ENCODE measurements at regions of chr14 and their contacts with region 1.

Region 1: DNA sequence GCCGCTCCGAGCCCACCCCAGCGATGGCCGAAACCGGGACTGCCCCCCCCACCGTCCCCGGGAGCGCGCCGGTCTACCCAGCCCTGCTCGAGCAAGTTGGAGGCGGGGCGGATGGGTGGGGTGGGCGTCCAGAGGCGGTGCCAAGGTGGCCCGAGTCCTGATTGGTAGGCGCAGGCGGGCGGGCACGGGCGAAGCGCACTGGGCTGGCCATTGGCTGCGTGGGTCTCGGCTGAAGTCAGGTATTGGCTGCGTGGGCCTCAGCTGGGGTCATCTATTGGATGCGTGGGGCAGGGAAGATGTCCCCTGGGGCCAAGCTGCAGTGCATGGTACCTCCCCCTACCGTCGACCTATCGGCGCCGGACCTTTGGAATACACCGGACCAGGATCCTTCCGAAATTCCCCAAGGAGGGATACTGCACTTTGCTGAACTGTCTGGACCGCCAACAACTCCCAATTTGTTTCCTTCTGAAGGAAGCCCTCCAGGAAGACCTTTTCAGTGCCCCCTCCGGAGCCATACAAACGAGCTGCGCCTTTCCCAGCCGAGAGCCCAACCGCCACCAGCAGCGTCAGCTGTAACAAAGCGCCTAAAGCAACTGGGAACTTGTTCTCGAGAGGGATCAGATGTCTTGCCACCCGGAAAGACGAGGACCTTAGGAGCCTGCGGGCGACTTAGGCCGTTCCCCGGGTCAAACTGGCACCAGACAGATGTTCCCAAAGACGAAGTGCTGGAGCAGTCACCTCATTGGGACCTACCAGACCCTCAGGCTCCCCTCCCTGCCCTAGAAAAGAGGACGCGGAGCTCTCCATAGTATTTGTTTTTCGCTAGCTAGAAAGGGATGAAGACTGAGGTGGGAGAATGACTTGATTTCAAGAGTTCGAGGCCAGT is at the start of gene HOMEZ:
- DNase-seq: peak; percentile 99
- H3K4me3 ChIP-seq: peak within 1 kb of the TSS; percentile 79 to 98 (median 94)
- H3K27ac ChIP-seq: peak within 1 kb of the TSS; percentile 65
- H3K4me1 ChIP-seq: peaks cover 21% of the 10 kb centered on the region
- H3K27me3 ChIP-seq: peaks cover 2 to 12% of the 10 kb centered on the region in 2 experiments
- CTCF ChIP-seq: no peak
- POLR2A ChIP-seq: peak; percentile 84
- total RNA-seq, gene HOMEZ: 11.3 and 11.7 TPM in 2 replicates

Region 2: GRCh38 chr14:23406244-23406643 is 120.0 kb after region 1 on chr14:
- CTCF ChIA-PET with region 1: no interaction called
- POLR2A ChIA-PET with region 1: no interaction called
- dilution Hi-C with region 1: no loop called
- intact Hi-C with region 1: no loop called
- DNase-seq: no peak
- H3K4me3 ChIP-seq: no peak overlapping the region
- H3K27ac ChIP-seq: no peak overlapping the region
- H3K4me1 ChIP-seq: no peaks in the 10 kb centered on the region
- H3K27me3 ChIP-seq: no peaks in the 10 kb centered on the region
- CTCF ChIP-seq: no peak
- POLR2A ChIP-seq: no peak

Region 3: GRCh38 chr14:23469127-23469905 is 183.1 kb after region 1 on chr14 and contains the start of gene NGDN:
- CTCF ChIA-PET with region 1: no interaction called
- POLR2A ChIA-PET with region 1: no interaction called
- dilution Hi-C with region 1: no loop called
- intact Hi-C with region 1: loop called (anchors 1 kb)
- DNase-seq: peak; percentile 100
- H3K4me3 ChIP-seq: peak within 1 kb of the TSS; percentile 73 to 91 (median 83)
- H3K27ac ChIP-seq: peak within 1 kb of the TSS; percentile 78
- H3K4me1 ChIP-seq: peaks cover 5% of the 10 kb centered on the region
- H3K27me3 ChIP-seq: no peaks in the 10 kb centered on the region
- CTCF ChIP-seq: peak; percentile 79 to 83
- POLR2A ChIP-seq: peak; percentile 52
- total RNA-seq, gene NGDN: 36.3 and 36.5 TPM in 2 replicates